T-cell (primary cell): ENCODE measurements at regions of chr20 and their contacts with region 1.

Region 1: GRCh38 chr20:4966826-4967751 is 34.2 kb downstream of the SLC23A2 start:
- DNase-seq: no peak
- ATAC-seq: no peak
- H3K4me3 ChIP-seq: no peak overlapping the region
- H3K4me3 Mint-ChIP-seq: no peak overlapping the region
- H3K27ac ChIP-seq: no peak overlapping the region
- H3K27ac Mint-ChIP-seq: no peak overlapping the region
- H3K4me1 ChIP-seq: peaks cover 0 to 6% of the 10 kb centered on the region in 2 experiments
- H3K4me1 Mint-ChIP-seq: peaks cover 8 to 22% (median 8%) of the 10 kb centered on the region in 3 donors
- H3K27me3 ChIP-seq: no peaks in the 10 kb centered on the region
- H3K27me3 Mint-ChIP-seq: no peaks in the 10 kb centered on the region

Region 2: DNA sequence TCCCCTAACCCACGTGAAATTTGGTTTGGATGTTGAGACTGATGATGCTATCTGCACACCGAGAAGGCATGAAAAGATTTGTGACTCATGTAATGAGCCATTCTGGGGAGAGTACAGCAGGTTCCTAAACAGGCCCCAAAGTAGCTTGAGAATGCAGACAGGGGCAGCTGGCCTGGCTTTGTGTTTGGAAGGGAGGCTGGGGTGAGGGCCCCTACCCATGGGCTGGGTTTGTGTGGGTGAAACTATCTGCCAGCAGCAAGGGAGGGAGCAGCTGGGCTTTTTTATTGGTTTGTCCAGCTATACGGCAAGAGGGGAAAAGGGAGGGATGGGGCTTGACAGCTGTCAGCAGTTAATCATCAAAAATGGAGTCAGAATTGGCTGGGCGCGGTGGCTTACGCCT is 864.7 kb before region 1 on chr20:
- CTCF ChIA-PET with region 1: no interaction called
- POLR2A ChIA-PET with region 1: interaction called in 1 of 2 experiments, 10 read pairs
- DNase-seq: no peak
- ATAC-seq: no peak
- H3K4me3 ChIP-seq: no peak overlapping the region
- H3K4me3 Mint-ChIP-seq: no peak overlapping the region
- H3K27ac ChIP-seq: no peak overlapping the region
- H3K27ac Mint-ChIP-seq: no peak overlapping the region
- H3K4me1 ChIP-seq: no peaks in the 10 kb centered on the region
- H3K4me1 Mint-ChIP-seq: no peaks in the 10 kb centered on the region
- H3K27me3 ChIP-seq: peaks cover 0 to 5% of the 10 kb centered on the region in 2 experiments
- H3K27me3 Mint-ChIP-seq: no peaks in the 10 kb centered on the region

Region 3: GRCh38 chr20:4929686-4930397 is 37.2 kb before region 1 on chr20:
- CTCF ChIA-PET with region 1: no interaction called
- POLR2A ChIA-PET with region 1: no interaction called
- DNase-seq: no peak
- ATAC-seq: no peak
- H3K4me3 ChIP-seq: no peak overlapping the region
- H3K4me3 Mint-ChIP-seq: no peak overlapping the region
- H3K27ac ChIP-seq: no peak overlapping the region
- H3K27ac Mint-ChIP-seq: no peak overlapping the region
- H3K4me1 ChIP-seq: no peaks in the 10 kb centered on the region
- H3K4me1 Mint-ChIP-seq: peaks cover 2 to 7% (median 6%) of the 10 kb centered on the region in 3 donors
- H3K27me3 ChIP-seq: no peaks in the 10 kb centered on the region
- H3K27me3 Mint-ChIP-seq: no peaks in the 10 kb centered on the region